Activated CD4-positive, alpha-beta T cell treated with anti-CD3 and anti-CD28 coated beads for 36 hours (primary cell): ENCODE measurements at regions of chr4 and their contacts with region 1.

Region 1: DNA sequence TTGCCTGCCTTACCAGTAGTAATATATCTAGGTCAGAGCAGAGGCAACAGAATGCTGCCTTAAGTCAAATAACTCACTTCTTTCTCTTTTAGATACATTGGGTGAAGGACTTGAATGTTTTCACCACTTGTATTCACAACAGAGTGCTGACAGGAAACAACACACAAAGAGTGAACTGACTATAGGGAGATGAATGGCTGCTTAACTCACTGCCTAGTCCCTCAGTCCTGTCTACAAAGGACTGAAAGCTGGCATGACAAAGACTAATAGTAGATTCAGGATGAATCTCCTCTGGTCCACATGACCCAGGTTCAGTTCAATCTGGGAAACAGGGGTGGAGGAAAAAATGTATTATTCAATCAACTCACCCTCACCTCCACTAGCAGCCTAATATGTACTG is 134.2 kb downstream of the GALNTL6 start:
- DNase-seq: no peak
- ATAC-seq: no peak
- H3K4me3 Mint-ChIP-seq: no peak overlapping the region
- H3K27ac Mint-ChIP-seq: no peak overlapping the region
- H3K4me1 Mint-ChIP-seq: no peaks in the 10 kb centered on the region
- H3K27me3 Mint-ChIP-seq: no peaks in the 10 kb centered on the region

Region 2: GRCh38 chr4:171221181-171221580 is 726.2 kb before region 1 on chr4:
- CTCF ChIA-PET with region 1: no interaction called
- POLR2A ChIA-PET with region 1: no interaction called
- intact Hi-C with region 1: no loop called
- DNase-seq: no peak
- ATAC-seq: no peak
- H3K4me3 Mint-ChIP-seq: no peak overlapping the region
- H3K27ac Mint-ChIP-seq: no peak overlapping the region
- H3K4me1 Mint-ChIP-seq: no peaks in the 10 kb centered on the region
- H3K27me3 Mint-ChIP-seq: no peaks in the 10 kb centered on the region

Region 3: DNA sequence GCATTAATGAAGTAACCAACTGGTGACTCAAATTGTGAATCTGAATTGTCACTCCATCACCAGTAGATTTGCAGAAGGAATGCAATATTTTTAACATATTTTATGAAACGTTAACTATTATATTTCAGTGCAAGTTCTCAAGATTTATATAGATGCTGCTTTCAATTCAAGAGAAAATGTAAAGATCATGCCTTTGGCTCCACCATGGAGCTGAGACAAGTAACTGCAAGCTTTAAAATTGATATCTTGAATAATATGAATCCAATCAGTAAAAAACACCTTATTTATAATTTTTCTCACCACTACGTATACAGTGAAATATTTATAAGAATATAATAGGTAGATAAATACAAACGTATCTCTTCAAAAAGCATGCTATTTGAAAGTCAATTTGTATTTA is 162.0 kb before region 1 on chr4:
- CTCF ChIA-PET with region 1: no interaction called
- POLR2A ChIA-PET with region 1: no interaction called
- intact Hi-C with region 1: no loop called
- DNase-seq: no peak
- ATAC-seq: no peak
- H3K4me3 Mint-ChIP-seq: no peak overlapping the region
- H3K27ac Mint-ChIP-seq: no peak overlapping the region
- H3K4me1 Mint-ChIP-seq: no peaks in the 10 kb centered on the region
- H3K27me3 Mint-ChIP-seq: no peaks in the 10 kb centered on the region

Region 4: DNA sequence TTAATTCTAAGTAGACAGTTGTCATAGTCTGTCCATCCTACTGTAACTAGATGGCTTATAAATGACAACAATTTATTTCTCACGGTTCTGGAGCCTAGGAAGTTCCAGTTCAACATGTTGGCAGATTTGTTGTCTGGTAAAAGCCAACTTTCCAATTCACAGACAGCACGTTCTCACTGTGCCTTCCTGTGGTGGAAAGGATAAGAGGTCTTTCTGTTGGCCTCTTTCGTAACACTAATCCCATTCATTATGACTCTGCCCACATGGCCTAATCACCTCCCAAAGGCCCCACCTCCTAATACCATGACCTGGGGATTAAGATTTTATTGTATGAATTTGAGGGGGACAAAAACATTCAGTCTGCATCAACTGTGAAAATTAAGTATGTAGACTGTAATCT is 51.0 kb before region 1 on chr4:
- CTCF ChIA-PET with region 1: no interaction called
- POLR2A ChIA-PET with region 1: no interaction called
- intact Hi-C with region 1: loop called in 1 of 2 experiments (anchors 5 kb)
- DNase-seq: no peak
- ATAC-seq: no peak
- H3K4me3 Mint-ChIP-seq: no peak overlapping the region
- H3K27ac Mint-ChIP-seq: no peak overlapping the region
- H3K4me1 Mint-ChIP-seq: no peaks in the 10 kb centered on the region
- H3K27me3 Mint-ChIP-seq: no peaks in the 10 kb centered on the region